ENCODE measurements at regions of chr5 and their contacts with region 1.

Region 1: DNA sequence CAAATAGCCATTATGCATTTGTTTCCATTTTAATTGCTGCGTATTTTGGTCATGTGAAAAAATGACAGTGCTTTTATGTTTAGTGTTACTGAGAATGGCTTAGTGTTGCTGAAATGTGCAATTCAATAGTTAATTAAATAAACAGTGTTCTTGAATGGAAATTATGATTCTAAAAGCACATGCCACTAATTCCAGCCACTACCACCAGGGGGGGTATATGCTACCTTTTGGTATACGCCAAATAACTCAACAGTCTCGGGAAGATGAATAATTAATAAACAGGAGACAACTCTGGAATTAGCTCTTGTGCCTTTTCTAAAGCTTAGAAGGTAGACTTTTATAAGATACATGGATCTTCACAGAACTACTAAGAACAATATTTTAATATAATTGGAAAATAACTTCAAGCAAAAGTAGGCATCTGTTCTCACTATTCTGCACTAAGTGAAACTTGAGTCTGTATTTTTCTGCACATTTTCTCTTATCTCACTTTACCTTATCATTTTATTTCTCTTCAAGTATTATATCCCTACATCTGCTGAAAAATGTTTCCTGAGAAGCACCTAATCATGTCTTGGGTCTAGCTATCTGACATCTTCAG is 83.5 kb upstream of the MINAR2 start:
- DNase-seq: peak; percentile 51 to 71
- H3K4me3 ChIP-seq: no peak overlapping the region
- H3K4me3 Mint-ChIP-seq: no peak overlapping the region
- H3K27ac Mint-ChIP-seq: no peak overlapping the region
- H3K4me1 ChIP-seq: no peaks in the 10 kb centered on the region
- H3K4me1 Mint-ChIP-seq: no peaks in the 10 kb centered on the region
- H3K27me3 ChIP-seq: no peaks in the 10 kb centered on the region
- H3K27me3 Mint-ChIP-seq: peaks cover 3% of the 10 kb centered on the region
- CTCF ChIP-seq: peak; percentile 78 to 87

Region 2: DNA sequence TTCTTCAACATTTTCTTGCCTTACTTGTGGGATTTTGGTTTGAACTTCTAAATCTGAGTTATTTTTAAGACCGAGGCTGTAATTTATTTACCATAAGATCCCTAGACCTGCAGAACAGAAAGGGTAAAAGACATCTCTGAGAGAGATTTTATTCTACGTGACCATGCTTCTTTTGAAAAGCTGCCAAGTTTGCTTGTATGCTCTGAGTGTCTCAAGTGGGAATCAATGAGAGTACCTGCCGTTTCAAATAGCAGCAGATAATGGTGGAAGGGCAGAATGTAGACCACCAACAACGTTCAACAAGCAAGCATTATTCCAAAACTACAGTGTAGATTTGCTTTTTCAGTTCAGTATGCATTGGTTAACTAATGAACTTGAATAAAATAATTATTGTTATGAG is 25.1 kb before region 1 on chr5:
- CTCF ChIA-PET with region 1: no interaction called
- POLR2A ChIA-PET with region 1: no interaction called
- intact Hi-C with region 1: no loop called
- DNase-seq: no peak
- H3K4me3 ChIP-seq: no peak overlapping the region
- H3K4me3 Mint-ChIP-seq: no peak overlapping the region
- H3K27ac Mint-ChIP-seq: no peak overlapping the region
- H3K4me1 ChIP-seq: no peaks in the 10 kb centered on the region
- H3K4me1 Mint-ChIP-seq: no peaks in the 10 kb centered on the region
- H3K27me3 ChIP-seq: no peaks in the 10 kb centered on the region
- H3K27me3 Mint-ChIP-seq: no peaks in the 10 kb centered on the region
- CTCF ChIP-seq: no peak

Region 3: GRCh38 chr5:129852747-129853352 is 188.4 kb after region 1 on chr5:
- CTCF ChIA-PET with region 1: interaction called, 3 read pairs
- POLR2A ChIA-PET with region 1: no interaction called
- intact Hi-C with region 1: loop called (anchors 2 kb)
- DNase-seq: peak; percentile 77 to 82
- H3K4me3 ChIP-seq: no peak overlapping the region
- H3K4me3 Mint-ChIP-seq: no peak overlapping the region
- H3K27ac Mint-ChIP-seq: no peak overlapping the region
- H3K4me1 ChIP-seq: no peaks in the 10 kb centered on the region
- H3K4me1 Mint-ChIP-seq: no peaks in the 10 kb centered on the region
- H3K27me3 ChIP-seq: no peaks in the 10 kb centered on the region
- H3K27me3 Mint-ChIP-seq: peaks cover 9% of the 10 kb centered on the region
- CTCF ChIP-seq: peak; percentile 86 to 92